Mammary epithelial cell (primary cell): ENCODE measurements at regions of chr4 and their contacts with region 1.

Region 1: DNA sequence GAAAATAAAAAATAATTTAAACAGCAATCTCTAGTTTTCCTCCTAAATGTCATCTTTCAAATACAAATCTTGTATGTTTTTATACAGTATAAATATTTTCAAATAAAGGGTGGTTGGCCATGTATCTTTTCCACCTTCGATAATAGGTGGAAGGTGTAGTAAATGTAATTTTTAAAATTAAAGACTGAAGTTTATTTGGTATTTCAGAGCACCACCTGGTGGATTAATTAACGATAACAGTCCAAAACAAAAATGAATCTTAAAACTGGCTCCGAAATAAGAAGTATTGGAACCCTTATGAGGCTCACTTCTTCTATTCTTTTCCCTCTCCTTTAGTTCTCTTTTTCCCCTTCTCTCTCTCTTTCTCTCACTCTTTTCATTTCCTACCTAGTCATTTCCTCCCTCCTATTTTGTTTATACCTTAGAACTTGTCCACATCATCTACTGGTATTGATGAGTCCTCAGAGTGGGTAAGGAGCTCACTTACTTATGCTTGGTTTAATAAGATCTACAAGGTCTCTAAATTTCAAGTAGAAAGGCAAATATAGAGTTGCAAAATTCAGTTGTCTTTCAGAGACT is 82.9 kb upstream of the EXOC1L start:
- DNase-seq: no peak
- H3K4me3 ChIP-seq: no peak overlapping the region
- H3K27ac ChIP-seq: no peak overlapping the region
- H3K4me1 ChIP-seq: peaks cover 14% of the 10 kb centered on the region
- H3K27me3 ChIP-seq: no peaks in the 10 kb centered on the region
- CTCF ChIP-seq: peak; percentile 37 to 44

Region 2: GRCh38 chr4:54971474-54971950 is 765.2 kb before region 1 on chr4:
- CTCF ChIA-PET with region 1: no interaction called
- dilution Hi-C with region 1: no loop called
- in situ Hi-C with region 1: loop called in 1 of 2 experiments (anchors 10 kb)
- intact Hi-C with region 1: loop called (anchors 2 kb)
- DNase-seq: peak; percentile 32
- H3K4me3 ChIP-seq: no peak overlapping the region
- H3K27ac ChIP-seq: no peak overlapping the region
- H3K4me1 ChIP-seq: no peaks in the 10 kb centered on the region
- H3K27me3 ChIP-seq: no peaks in the 10 kb centered on the region
- CTCF ChIP-seq: peak; percentile 66 to 75

Region 3: DNA sequence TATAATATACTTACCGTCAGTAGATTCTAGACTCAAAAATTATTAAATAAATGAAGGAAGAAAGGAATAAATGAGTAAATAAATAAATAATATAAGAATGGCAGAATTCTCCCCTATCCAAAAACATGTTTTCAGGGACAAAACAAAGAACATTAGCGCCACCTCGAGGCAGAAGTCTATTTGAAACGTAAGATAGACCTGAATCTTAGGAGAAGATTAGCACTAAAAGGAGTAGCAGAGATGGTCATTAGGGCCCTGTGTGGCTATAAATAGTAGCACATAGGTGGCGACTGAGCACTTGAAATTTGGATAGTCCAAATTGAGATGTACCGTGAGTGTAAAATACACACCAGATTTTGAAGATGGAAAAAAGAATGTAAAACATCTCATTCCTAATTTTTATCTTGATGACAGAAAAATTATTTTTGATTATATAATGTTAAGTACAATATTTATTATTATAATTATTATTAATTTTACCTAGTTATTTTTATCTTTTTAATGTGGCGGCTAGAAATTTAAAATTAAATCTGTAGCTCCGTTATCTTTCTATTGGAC is 414.9 kb before region 1 on chr4:
- CTCF ChIA-PET with region 1: no interaction called
- dilution Hi-C with region 1: no loop called
- in situ Hi-C with region 1: no loop called
- intact Hi-C with region 1: loop called (anchors 1 kb)
- DNase-seq: peak; percentile 63
- H3K4me3 ChIP-seq: no peak overlapping the region
- H3K27ac ChIP-seq: no peak overlapping the region
- H3K4me1 ChIP-seq: no peaks in the 10 kb centered on the region
- H3K27me3 ChIP-seq: no peaks in the 10 kb centered on the region
- CTCF ChIP-seq: peak; percentile 61 to 73

Region 4: DNA sequence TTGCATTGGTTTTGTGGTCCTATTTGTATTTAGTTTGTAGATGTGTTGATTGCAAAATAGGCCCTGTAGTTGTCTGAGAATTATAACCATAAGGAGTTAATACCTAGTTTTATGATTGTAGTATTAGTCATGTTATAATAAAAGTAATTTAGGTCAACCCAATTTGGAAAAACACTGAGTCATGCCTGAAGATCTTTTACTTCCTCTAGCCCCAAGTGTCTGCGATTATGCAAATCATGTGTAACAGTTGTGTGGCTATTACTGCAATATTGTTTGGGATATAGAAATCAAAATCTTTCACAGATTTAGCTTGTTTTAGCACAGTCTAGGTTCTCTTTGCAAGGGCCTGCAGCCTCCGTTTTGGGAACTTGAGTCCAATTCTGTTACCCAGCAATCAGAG is 378.0 kb before region 1 on chr4:
- CTCF ChIA-PET with region 1: interaction called, 3 read pairs
- dilution Hi-C with region 1: no loop called
- in situ Hi-C with region 1: loop called in 1 of 2 experiments (anchors 10 kb)
- intact Hi-C with region 1: no loop called
- DNase-seq: peak; percentile 83
- H3K4me3 ChIP-seq: no peak overlapping the region
- H3K27ac ChIP-seq: no peak overlapping the region
- H3K4me1 ChIP-seq: peaks cover 25% of the 10 kb centered on the region
- H3K27me3 ChIP-seq: no peaks in the 10 kb centered on the region
- CTCF ChIP-seq: no peak

Region 5: DNA sequence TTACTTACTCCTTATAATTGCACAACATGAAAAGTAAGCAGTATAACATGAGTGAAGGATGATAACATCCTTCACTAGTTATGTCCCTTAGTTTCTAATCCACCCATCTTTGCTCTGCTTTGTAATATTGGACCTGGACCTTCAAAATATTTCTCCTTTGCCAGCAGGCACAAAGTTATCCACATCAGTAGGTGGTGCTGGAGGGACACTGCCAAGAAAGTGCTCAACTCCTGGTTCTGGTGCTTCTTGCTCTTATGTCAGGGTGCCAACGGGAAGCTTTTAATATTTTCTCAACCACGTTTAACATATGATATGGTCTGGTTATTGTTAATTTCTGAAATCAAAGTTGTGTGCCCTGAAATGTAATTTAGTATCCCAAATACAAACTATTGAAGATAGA is 291.9 kb before region 1 on chr4:
- CTCF ChIA-PET with region 1: no interaction called
- dilution Hi-C with region 1: no loop called
- in situ Hi-C with region 1: loop called (anchors 10 to 25 kb)
- intact Hi-C with region 1: loop called (anchors 2 kb)
- DNase-seq: no peak
- H3K4me3 ChIP-seq: no peak overlapping the region
- H3K27ac ChIP-seq: no peak overlapping the region
- H3K4me1 ChIP-seq: peaks cover 8% of the 10 kb centered on the region
- H3K27me3 ChIP-seq: no peaks in the 10 kb centered on the region
- CTCF ChIP-seq: peak; percentile 32 to 64

Region 6: GRCh38 chr4:55554453-55555030 is 182.2 kb before region 1 on chr4:
- CTCF ChIA-PET with region 1: no interaction called
- dilution Hi-C with region 1: no loop called
- in situ Hi-C with region 1: loop called in 1 of 2 experiments (anchors 10 kb)
- intact Hi-C with region 1: loop called (anchors 1 kb)
- DNase-seq: no peak
- H3K4me3 ChIP-seq: no peak overlapping the region
- H3K27ac ChIP-seq: no peak overlapping the region
- H3K4me1 ChIP-seq: peaks cover 11% of the 10 kb centered on the region
- H3K27me3 ChIP-seq: no peaks in the 10 kb centered on the region
- CTCF ChIP-seq: peak; percentile 12 to 56

Region 7: DNA sequence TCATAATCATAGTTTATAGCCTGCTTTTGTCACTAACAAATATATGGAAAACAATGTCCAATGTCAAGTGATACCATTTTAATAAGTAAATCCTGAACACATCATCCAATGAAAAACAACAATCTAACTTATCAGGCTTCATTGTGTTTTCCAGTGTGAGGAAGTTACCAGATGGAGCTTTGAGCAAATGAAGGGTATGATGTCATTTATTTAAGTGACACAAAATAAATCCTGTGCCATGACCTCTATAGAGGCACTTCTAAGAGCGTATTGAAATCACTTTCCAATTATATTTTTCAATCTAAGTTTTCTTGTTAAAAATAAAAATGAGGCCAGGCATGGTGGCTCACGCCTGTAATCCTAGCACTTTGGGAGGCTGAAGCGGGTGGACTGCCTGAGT is 52.4 kb before region 1 on chr4:
- CTCF ChIA-PET with region 1: no interaction called
- dilution Hi-C with region 1: no loop called
- in situ Hi-C with region 1: no loop called
- intact Hi-C with region 1: no loop called
- DNase-seq: no peak
- H3K4me3 ChIP-seq: no peak overlapping the region
- H3K27ac ChIP-seq: no peak overlapping the region
- H3K4me1 ChIP-seq: no peaks in the 10 kb centered on the region
- H3K27me3 ChIP-seq: no peaks in the 10 kb centered on the region
- CTCF ChIP-seq: no peak

Region 8: GRCh38 chr4:55910140-55910539 is 173.4 kb after region 1 on chr4:
- CTCF ChIA-PET with region 1: no interaction called
- dilution Hi-C with region 1: no loop called
- in situ Hi-C with region 1: no loop called
- intact Hi-C with region 1: no loop called
- DNase-seq: peak; percentile 20
- H3K4me3 ChIP-seq: no peak overlapping the region
- H3K27ac ChIP-seq: no peak overlapping the region
- H3K4me1 ChIP-seq: peaks cover 13% of the 10 kb centered on the region
- H3K27me3 ChIP-seq: no peaks in the 10 kb centered on the region
- CTCF ChIP-seq: no peak

Region 9: GRCh38 chr4:56067825-56068224 is 331.1 kb after region 1 on chr4:
- CTCF ChIA-PET with region 1: no interaction called
- dilution Hi-C with region 1: no loop called
- in situ Hi-C with region 1: no loop called
- intact Hi-C with region 1: no loop called
- DNase-seq: no peak
- H3K4me3 ChIP-seq: no peak overlapping the region
- H3K27ac ChIP-seq: no peak overlapping the region
- H3K4me1 ChIP-seq: no peaks in the 10 kb centered on the region
- H3K27me3 ChIP-seq: peaks cover 5% of the 10 kb centered on the region
- CTCF ChIP-seq: no peak

Region 10: DNA sequence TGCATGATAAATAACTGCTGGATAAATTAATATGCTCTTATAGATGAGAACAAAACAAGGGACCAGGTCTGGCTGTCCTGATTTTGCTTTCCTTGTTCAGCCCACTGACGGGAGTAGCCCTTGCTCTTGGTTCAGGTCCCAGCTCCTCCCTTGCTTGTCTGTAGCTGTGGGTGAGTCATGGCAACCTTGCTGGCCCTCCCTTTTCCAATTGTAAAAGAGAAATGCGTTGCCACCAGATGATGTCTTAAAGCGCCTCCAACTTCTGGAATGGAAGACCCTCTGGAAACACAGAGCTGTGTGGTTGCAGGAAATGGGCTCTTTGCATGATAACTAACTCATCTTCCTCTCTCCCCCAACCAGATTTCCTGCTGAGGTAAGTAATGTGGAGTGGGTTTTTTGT is 479.2 kb after region 1 on chr4:
- CTCF ChIA-PET with region 1: no interaction called
- dilution Hi-C with region 1: no loop called
- in situ Hi-C with region 1: no loop called
- intact Hi-C with region 1: no loop called
- DNase-seq: peak; percentile 15
- H3K4me3 ChIP-seq: no peak overlapping the region
- H3K27ac ChIP-seq: no peak overlapping the region
- H3K4me1 ChIP-seq: no peaks in the 10 kb centered on the region
- H3K27me3 ChIP-seq: no peaks in the 10 kb centered on the region
- CTCF ChIP-seq: no peak